ENCODE measurements at regions of chr17 and their contacts with region 1.

Region 1: DNA sequence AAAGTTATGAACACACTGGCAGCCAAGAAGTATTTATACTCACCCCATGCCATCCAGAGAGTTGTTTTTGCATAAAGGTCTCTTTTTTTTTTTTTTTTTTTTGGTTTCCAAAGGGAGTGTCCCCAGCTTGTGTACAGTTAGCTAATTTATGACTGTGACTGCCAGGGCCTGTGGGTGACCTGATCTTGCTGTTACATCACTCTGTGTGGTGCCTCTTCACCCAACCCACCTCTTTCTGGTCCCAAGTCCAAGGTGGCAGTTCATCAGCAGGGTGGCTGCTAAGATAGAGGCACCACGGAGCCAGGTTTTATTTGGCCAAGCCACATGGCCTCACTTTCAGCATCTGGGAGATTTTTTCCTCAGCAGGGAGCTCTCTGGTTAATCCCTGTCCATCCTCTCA is at the start of gene NOS2:
- DNase-seq: no peak
- H3K4me3 ChIP-seq: no peak within 1 kb of the TSS
- H3K27ac ChIP-seq: no peak within 1 kb of the TSS
- H3K4me1 ChIP-seq: no peaks in the 10 kb centered on the region
- H3K27me3 ChIP-seq: peaks cover 0 to 2% (median 0%) of the 10 kb centered on the region in 3 donors
- CTCF ChIP-seq: no peak
- EP300 ChIP-seq: no peak
- POLR2A ChIP-seq: no peak
- total RNA-seq, gene NOS2: 0.16 to 0.83 (median 0.41) TPM in 3 of 4 donors, not detected in the other

Region 2: GRCh38 chr17:27778193-27778592 is 22.3 kb before region 1 on chr17:
- intact Hi-C with region 1: no loop called
- DNase-seq: no peak
- H3K4me3 ChIP-seq: no peak overlapping the region
- H3K27ac ChIP-seq: no peak overlapping the region
- H3K4me1 ChIP-seq: no peaks in the 10 kb centered on the region
- H3K27me3 ChIP-seq: no peaks in the 10 kb centered on the region
- CTCF ChIP-seq: no peak
- EP300 ChIP-seq: no peak
- POLR2A ChIP-seq: no peak

Region 3: DNA sequence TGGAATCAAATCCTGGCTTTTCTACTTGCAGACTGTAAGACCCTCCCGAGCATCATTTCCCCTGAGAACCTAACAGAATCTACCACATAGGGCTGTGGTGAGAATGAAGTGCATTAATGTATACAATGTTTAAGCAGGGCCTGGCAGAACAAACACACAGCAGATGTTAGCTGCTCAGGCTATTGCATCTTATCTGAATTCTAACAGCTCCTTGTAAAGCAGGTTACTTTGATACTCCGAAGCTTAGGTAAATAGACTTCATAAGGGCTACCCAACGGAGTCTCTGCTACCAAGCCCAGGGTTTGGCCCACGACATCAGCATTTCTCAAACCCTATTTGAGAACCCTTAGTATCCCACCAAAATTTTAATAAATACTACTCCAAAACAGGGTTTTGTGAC is 24.2 kb after region 1 on chr17:
- intact Hi-C with region 1: no loop called
- DNase-seq: no peak
- H3K4me3 ChIP-seq: no peak overlapping the region
- H3K27ac ChIP-seq: no peak overlapping the region
- H3K4me1 ChIP-seq: no peaks in the 10 kb centered on the region
- H3K27me3 ChIP-seq: no peaks in the 10 kb centered on the region
- CTCF ChIP-seq: no peak
- EP300 ChIP-seq: no peak
- POLR2A ChIP-seq: no peak

Region 4: GRCh38 chr17:28252436-28252835 is 451.9 kb after region 1 on chr17:
- intact Hi-C with region 1: loop called (anchors 5 kb)
- DNase-seq: no peak
- H3K4me3 ChIP-seq: no peak overlapping the region
- H3K27ac ChIP-seq: no peak overlapping the region
- H3K4me1 ChIP-seq: peaks cover 0 to 12% (median 8%) of the 10 kb centered on the region in 4 donors
- H3K27me3 ChIP-seq: peaks cover 11 to 56% (median 27%) of the 10 kb centered on the region in 3 donors
- CTCF ChIP-seq: no peak
- EP300 ChIP-seq: no peak
- POLR2A ChIP-seq: no peak